Sigmoid colon (tissue), 7 donors: ENCODE measurements at regions of chr10 and their contacts with region 1.

Region 1: GRCh38 chr10:74826142-74827044 is at the start of gene KAT6B:
- DNase-seq: peak; percentile 100
- H3K4me3 ChIP-seq: peak within 1 kb of the TSS; percentile 69 to 99 (median 88)
- H3K27ac ChIP-seq: peak within 1 kb of the TSS; percentile 99 to 100 (median 99)
- H3K4me1 ChIP-seq: peaks cover 0 to 49% (median 37%) of the 10 kb centered on the region in 4 donors
- H3K27me3 ChIP-seq: no peaks in the 10 kb centered on the region
- CTCF ChIP-seq: peak in 1 of 4 experiments; percentile 28
- EP300 ChIP-seq: no peak
- POLR2A ChIP-seq: no peak
- total RNA-seq, gene KAT6B: 49.9 to 77.0 (median 64.2) TPM

Region 2: GRCh38 chr10:74151056-74151878 is 675.1 kb before region 1 on chr10 and contains the start of gene ADK:
- intact Hi-C with region 1: loop called (anchors 5 kb)
- DNase-seq: peak; percentile 99
- H3K4me3 ChIP-seq: peak within 1 kb of the TSS; percentile 74 to 85 (median 84)
- H3K27ac ChIP-seq: peak within 1 kb of the TSS; percentile 85 to 92 (median 88)
- H3K4me1 ChIP-seq: peaks cover 0 to 66% (median 49%) of the 10 kb centered on the region in 4 donors
- H3K27me3 ChIP-seq: no peaks in the 10 kb centered on the region
- CTCF ChIP-seq: peak in 1 of 4 experiments; percentile 16
- EP300 ChIP-seq: no peak
- POLR2A ChIP-seq: peak; percentile 56 to 72
- total RNA-seq, gene ADK: 15.2 to 31.3 (median 26.0) TPM

Region 3: DNA sequence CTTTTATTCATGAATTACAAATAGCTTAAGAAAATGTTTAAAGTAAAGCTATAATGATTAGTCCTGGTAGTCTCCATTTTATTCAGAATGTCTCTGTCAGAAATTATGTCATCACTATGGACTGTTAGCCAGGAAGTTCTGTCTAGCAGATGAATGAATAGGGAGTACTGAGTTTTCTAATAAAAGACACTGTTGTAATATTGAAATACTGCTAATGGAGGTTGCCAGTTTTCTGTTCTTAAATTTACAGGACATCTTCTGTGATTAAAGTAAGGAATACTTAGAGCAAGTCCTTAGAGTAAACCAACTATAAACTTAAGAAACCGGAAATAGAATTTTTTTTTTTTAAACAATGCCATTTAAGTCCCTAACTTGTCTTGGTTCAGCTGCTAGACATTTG is 365.6 kb before region 1 on chr10:
- intact Hi-C with region 1: no loop called
- DNase-seq: no peak
- H3K4me3 ChIP-seq: no peak overlapping the region
- H3K27ac ChIP-seq: peak overlapping the region in 3 of 4 donors; percentile 14 to 45 (median 16)
- H3K4me1 ChIP-seq: peaks cover 0 to 17% (median 3%) of the 10 kb centered on the region in 4 donors
- H3K27me3 ChIP-seq: no peaks in the 10 kb centered on the region
- CTCF ChIP-seq: no peak
- EP300 ChIP-seq: no peak
- POLR2A ChIP-seq: no peak

Region 4: DNA sequence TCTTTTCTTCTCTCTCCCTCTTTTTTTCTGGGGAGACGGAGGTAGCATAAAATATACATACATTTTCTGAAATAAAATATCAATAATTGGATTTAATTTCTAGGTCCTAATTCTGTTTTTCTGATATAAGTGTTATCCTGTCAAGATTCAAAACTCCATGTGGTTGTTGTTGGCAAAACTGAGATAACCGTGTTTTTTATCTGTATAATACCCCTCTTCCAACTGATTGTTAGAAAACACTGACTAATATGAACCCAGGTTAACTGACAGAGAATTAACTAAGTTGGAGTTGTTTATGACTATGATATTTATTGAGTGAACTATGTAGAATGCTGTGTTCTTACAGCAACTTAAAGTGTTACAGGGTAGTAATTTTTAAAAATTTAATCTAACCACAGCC is 236.5 kb before region 1 on chr10:
- intact Hi-C with region 1: loop called (anchors 2 kb)
- DNase-seq: no peak
- H3K4me3 ChIP-seq: no peak overlapping the region
- H3K27ac ChIP-seq: peak overlapping the region; percentile 28 to 72 (median 61)
- H3K4me1 ChIP-seq: peaks cover 0 to 88% (median 68%) of the 10 kb centered on the region in 4 donors
- H3K27me3 ChIP-seq: no peaks in the 10 kb centered on the region
- CTCF ChIP-seq: no peak
- EP300 ChIP-seq: no peak
- POLR2A ChIP-seq: no peak

Region 5: GRCh38 chr10:74924251-74924951 is 98.0 kb after region 1 on chr10:
- intact Hi-C with region 1: loop called (anchors 5 kb)
- DNase-seq: no peak
- H3K4me3 ChIP-seq: no peak overlapping the region
- H3K27ac ChIP-seq: peak overlapping the region; percentile 68 to 89 (median 77)
- H3K4me1 ChIP-seq: peaks cover 0 to 75% (median 64%) of the 10 kb centered on the region in 4 donors
- H3K27me3 ChIP-seq: no peaks in the 10 kb centered on the region
- CTCF ChIP-seq: no peak
- EP300 ChIP-seq: no peak
- POLR2A ChIP-seq: no peak

Region 6: GRCh38 chr10:75111367-75111906 is 285.0 kb after region 1 on chr10 and contains the start of gene SAMD8:
- intact Hi-C with region 1: loop called (anchors 5 kb)
- DNase-seq: peak; percentile 99
- H3K4me3 ChIP-seq: peak within 1 kb of the TSS; percentile 69 to 97 (median 84)
- H3K27ac ChIP-seq: peak within 1 kb of the TSS; percentile 95 to 99 (median 97)
- H3K4me1 ChIP-seq: peaks cover 0 to 34% (median 21%) of the 10 kb centered on the region in 4 donors
- H3K27me3 ChIP-seq: no peaks in the 10 kb centered on the region
- CTCF ChIP-seq: peak in 2 of 4 experiments; percentile 25 to 39
- EP300 ChIP-seq: no peak
- POLR2A ChIP-seq: peak; percentile 84 to 94
- total RNA-seq, gene SAMD8: 25.0 to 37.5 (median 28.8) TPM